ENCODE measurements at regions of chr4 and their contacts with region 1.

Region 1: DNA sequence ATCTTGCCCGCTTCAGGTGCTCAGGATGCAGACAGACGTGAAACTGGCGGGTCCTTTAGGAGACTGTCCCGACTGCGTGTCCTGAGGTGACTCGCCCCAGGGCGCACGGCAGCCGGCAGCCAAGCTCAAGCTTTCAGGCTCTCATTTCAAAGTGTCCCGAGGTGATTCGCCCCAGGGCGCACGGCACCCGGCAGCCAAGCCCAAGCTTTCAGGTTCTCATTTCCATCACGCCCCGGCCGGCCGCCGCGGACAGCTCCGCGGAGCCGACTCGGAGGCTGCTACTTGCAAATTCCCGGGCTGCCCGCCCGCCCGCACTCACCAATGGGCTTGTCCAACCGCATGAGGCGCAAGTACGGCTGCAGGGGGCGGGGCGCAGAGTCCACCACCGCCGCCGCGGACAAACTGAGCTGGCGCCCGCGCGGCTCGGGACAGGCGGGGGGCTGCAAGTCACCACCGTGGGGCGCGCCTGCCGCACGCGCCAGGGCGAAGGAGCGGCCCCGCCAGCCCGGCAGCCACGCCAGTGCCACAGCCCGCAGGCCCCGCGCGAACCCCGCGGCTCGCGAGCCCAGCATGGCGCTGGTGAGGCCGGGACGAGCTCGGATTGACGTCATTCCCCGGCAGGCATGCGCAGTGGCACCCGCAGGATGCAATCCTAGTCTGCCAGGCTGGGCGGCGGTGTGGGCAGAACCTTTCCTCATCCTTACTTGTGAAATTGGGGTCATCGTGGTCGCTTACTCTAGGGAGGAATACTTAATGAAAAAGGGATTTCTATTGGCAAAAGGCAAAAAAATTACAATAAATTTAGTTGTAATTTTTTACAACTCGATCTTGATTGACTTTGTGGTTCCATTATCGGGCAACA is at the start of gene COQ2:
- DNase-seq: peak; percentile 98
- H3K4me3 ChIP-seq: peak within 1 kb of the TSS; percentile 78 to 89 (median 86)
- H3K27ac ChIP-seq: peak within 1 kb of the TSS; percentile 91 to 98 (median 96)
- H3K4me1 ChIP-seq: peaks cover 13 to 21% (median 15%) of the 10 kb centered on the region in 4 donors
- H3K27me3 ChIP-seq: no peaks in the 10 kb centered on the region
- CTCF ChIP-seq: peak; percentile 27 to 46 (median 44)
- EP300 ChIP-seq: no peak
- POLR2A ChIP-seq: peak; percentile 23
- total RNA-seq, gene COQ2: 4.6 to 6.5 (median 5.4) TPM

Region 2: DNA sequence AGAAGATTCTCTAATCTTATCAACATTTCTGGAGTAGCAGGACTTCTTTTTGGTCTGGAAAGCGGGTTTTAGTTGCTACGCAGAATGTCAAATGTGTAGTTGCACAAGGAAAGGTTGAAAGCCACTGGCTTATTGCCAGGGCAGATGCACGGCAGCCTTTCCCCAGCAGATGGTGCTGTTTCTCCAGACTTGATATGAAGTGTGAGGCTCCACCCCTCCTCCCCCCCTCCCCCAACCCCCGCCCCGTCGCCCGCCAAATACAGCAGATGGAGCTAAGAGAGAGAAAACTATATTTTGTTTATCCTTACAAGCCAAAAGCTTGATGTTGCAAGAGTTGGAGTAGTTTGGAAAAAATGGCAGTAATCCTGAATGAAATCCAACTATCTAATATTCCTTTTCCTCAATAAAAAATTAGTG is 822.0 kb before region 1 on chr4:
- intact Hi-C with region 1: loop called (anchors 5 kb)
- DNase-seq: peak; percentile 99
- H3K4me3 ChIP-seq: no peak overlapping the region
- H3K27ac ChIP-seq: peak overlapping the region in 3 of 4 donors; percentile 8 to 44 (median 16)
- H3K4me1 ChIP-seq: peaks cover 0 to 18% (median 13%) of the 10 kb centered on the region in 4 donors
- H3K27me3 ChIP-seq: no peaks in the 10 kb centered on the region
- CTCF ChIP-seq: peak; percentile 77 to 96 (median 95)
- EP300 ChIP-seq: no peak
- POLR2A ChIP-seq: no peak

Region 3: GRCh38 chr4:82890901-82891706 is 393.3 kb before region 1 on chr4 and contains the start of gene SEC31A:
- intact Hi-C with region 1: loop called (anchors 10 kb)
- DNase-seq: peak; percentile 97
- H3K4me3 ChIP-seq: peak within 1 kb of the TSS; percentile 82 to 89 (median 86)
- H3K27ac ChIP-seq: peak within 1 kb of the TSS; percentile 93 to 97 (median 96)
- H3K4me1 ChIP-seq: peaks cover 19 to 48% (median 41%) of the 10 kb centered on the region in 4 donors
- H3K27me3 ChIP-seq: no peaks in the 10 kb centered on the region
- CTCF ChIP-seq: peak in 1 of 3 experiments; percentile 23
- EP300 ChIP-seq: no peak
- POLR2A ChIP-seq: peak; percentile 86
- total RNA-seq, gene SEC31A: 117 to 146 (median 131) TPM

Region 4: DNA sequence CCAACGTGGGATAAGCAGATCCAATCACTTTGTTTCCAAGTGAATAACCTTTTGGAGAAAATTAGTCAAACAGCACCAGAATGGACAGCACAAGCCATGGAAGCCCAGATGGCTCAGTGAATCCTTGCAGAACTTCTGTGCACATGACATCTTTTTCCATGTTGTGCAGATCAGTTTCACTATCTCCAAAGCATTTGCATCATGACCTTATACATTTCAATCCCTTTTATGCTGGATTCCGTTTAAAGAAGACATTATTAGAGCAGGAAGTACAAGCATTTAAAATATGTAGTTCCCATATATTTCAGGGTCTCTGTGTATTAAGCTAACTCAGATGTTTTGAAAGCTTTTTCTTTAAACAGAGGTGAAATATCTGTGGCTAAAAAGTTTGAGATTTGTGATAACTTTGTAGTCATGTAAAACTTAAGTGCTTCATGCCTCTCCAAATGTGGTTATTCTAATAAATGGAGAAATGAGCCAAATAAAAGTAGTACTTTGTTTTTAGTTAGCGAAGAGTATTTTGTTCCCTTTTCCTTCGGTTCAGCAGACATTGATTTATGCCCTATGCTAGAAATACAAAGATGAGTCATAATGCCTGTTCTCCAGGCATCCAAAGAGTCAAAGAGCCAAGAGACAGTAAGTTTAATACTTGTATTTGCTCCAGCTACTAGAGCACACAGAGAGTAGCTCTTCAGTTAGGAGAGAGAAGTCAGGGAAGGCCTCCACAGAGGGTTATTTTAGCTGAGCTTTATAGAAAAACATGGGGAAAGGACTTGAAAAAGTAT is 208.9 kb before region 1 on chr4:
- intact Hi-C with region 1: loop called (anchors 5 kb)
- DNase-seq: no peak
- H3K4me3 ChIP-seq: no peak overlapping the region
- H3K27ac ChIP-seq: peak overlapping the region; percentile 56 to 69 (median 65)
- H3K4me1 ChIP-seq: peaks cover 0 to 26% (median 24%) of the 10 kb centered on the region in 4 donors
- H3K27me3 ChIP-seq: no peaks in the 10 kb centered on the region
- CTCF ChIP-seq: no peak
- EP300 ChIP-seq: no peak
- POLR2A ChIP-seq: no peak

Region 5: DNA sequence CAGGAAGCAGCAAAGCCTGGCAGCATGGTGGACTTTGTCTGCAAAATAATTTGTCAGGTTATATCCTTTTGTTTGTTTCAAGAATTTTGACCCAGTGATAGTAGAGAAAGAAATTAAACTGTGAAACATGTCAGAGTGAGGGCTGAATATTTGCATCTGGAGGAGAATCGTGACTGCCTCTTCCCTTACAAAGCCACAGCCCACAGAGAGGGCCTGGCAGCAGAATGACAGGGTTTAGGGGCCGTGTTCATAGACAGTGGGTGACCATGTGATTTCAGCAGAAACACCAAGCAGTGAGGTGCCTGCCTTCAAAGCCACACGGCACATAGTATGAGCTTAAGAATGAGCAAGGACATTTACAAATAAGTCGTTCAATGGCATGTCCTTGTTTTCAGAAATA is 145.5 kb before region 1 on chr4:
- intact Hi-C with region 1: no loop called
- DNase-seq: no peak
- H3K4me3 ChIP-seq: no peak overlapping the region
- H3K27ac ChIP-seq: no peak overlapping the region
- H3K4me1 ChIP-seq: no peaks in the 10 kb centered on the region
- H3K27me3 ChIP-seq: no peaks in the 10 kb centered on the region
- CTCF ChIP-seq: no peak
- EP300 ChIP-seq: no peak
- POLR2A ChIP-seq: no peak

Region 6: GRCh38 chr4:83455281-83456129 is 171.1 kb after region 1 on chr4 and contains the starts of genes HELQ and MRPS18C:
- intact Hi-C with region 1: loop called (anchors 10 kb)
- DNase-seq: peak; percentile 99
- H3K4me3 ChIP-seq: peak within 1 kb of the TSS; percentile 64 to 84 (median 82)
- H3K27ac ChIP-seq: peak within 1 kb of the TSS; percentile 93 to 97 (median 96)
- H3K4me1 ChIP-seq: peaks cover 24 to 31% (median 29%) of the 10 kb centered on the region in 4 donors
- H3K27me3 ChIP-seq: no peaks in the 10 kb centered on the region
- CTCF ChIP-seq: peak in 2 of 3 experiments; percentile 14 to 39
- EP300 ChIP-seq: no peak
- POLR2A ChIP-seq: peak; percentile 8
- total RNA-seq, gene HELQ: 7.8 to 15.9 (median 12.3) TPM
- total RNA-seq, gene MRPS18C: 15.7 to 30.3 (median 22.3) TPM

Measured in esophagus muscularis mucosa (tissue), 4 donors.